Activated CD4-positive, alpha-beta T cell treated with anti-CD3 and anti-CD28 coated beads, Interleukin-2, amount 10 ng/mL, durations not matched to agents 24 days and 14 days (primary cell): ENCODE measurements at regions of chr3 and their contacts with region 1.

Region 1: DNA sequence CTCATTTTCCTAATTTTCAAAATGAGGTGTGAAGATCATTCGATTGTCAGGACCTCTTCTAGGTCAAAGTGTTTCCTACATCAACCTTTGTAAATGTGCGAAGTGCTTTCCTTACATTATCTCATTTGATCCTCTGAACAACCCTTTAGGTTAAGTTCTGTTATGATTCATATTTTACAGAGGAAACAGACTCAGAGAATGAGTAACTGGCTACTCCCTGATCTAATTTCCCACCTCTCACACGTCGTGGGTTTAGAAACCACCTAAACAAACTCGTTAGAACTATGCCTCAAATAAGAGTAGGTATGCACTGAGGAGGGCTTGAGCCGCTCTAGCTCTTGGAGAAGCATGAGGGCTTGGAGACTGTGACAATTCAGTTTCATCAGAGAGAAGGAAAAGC is 148.6 kb downstream of the CD47 start:
- DNase-seq: peak; percentile 75
- H3K4me3 Mint-ChIP-seq: peak overlapping the region; percentile 43
- H3K27ac Mint-ChIP-seq: peak overlapping the region; percentile 73
- H3K4me1 Mint-ChIP-seq: peaks cover 22% of the 10 kb centered on the region
- H3K27me3 Mint-ChIP-seq: peaks cover 5% of the 10 kb centered on the region

Region 2: DNA sequence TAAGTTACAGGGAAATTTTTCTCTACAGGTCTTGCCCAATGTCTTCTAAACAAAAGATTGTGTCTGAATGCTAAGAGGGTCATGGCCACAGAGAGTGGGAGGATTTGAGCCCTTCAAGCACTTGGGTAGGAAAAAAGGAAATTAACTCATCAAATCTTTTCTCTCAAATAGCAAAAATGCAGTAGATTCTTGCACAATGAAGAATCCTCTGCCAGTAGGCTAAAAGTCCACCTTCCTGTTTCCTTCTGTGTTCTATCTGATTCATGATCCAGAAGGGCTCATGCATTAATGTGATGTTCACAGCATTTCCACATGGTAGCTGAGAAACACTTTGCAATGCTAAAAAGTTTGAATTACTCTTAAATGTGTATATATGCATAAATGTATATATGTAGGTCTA is 28.5 kb before region 1 on chr3:
- intact Hi-C with region 1: no loop called
- DNase-seq: no peak
- H3K4me3 Mint-ChIP-seq: no peak overlapping the region
- H3K27ac Mint-ChIP-seq: no peak overlapping the region
- H3K4me1 Mint-ChIP-seq: peaks cover 10% of the 10 kb centered on the region
- H3K27me3 Mint-ChIP-seq: peaks cover 21% of the 10 kb centered on the region

Region 3: DNA sequence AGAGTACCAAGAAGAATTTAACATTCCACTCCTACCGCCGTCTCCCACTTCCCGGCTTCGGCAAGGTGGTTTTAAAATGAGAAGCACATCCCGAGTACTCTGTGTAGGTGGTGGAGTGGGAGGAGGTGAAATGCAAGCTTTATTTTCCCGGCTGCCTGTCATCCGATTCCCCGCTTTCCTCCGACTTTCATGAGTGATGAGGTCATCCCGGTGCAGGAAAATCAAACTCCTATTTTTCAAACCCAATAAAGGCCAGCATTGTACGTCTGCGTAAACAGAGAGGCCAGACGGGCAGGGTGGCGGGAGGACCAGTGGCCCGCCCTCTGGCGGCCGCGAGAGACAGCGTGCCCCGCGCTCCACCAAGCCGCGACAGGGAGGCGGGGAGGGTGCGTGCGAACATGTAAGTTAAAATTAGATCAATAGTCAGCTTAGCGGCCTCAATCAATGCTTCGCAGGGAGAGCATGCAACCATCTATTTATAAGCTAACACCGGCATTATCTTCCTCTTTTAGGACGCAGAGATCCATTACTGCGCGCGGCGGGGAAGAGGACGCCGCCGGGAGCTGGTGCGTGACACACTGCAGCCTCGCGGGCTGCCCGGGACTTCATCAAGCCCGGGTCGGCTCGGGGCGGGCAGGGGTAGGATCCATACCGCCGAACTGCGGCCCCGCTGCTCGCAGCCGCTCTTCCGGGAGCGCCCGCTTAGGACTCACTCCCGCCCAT is 14.7 kb before region 1 on chr3:
- intact Hi-C with region 1: loop called (anchors 1 kb)
- DNase-seq: peak; percentile 90
- H3K4me3 Mint-ChIP-seq: peak overlapping the region; percentile 87
- H3K27ac Mint-ChIP-seq: peak overlapping the region; percentile 59
- H3K4me1 Mint-ChIP-seq: peaks cover 13% of the 10 kb centered on the region
- H3K27me3 Mint-ChIP-seq: peaks cover 19% of the 10 kb centered on the region

Region 4: DNA sequence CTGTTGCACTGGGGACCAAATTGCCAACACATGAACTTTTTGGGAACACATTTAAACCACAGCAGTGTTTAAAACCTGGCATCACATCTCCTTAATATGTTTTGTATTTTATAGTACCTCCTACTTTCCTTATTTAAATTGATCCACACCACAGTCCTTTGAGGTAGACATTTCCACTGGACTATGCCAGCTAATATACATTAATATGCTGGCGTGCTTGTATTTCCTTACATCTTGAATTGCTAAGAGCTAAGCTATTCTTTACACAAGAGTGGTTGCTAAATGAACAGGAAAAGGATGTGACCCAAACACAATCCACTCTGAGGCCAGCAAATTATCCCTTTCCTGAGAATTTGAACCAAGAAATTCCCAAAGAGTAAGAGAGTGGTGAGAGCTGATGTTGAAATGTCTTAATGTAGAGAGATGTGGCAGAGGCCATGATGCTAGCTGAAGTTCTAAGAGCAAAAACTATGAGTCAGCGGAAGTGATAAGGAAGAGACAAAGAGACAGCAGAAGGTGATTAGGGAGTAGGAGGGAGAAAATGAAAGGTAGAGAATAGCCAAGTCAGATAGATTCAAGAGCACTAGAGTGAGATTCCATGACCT is 17.4 kb after region 1 on chr3:
- intact Hi-C with region 1: loop called (anchors 2 kb)
- DNase-seq: no peak
- H3K4me3 Mint-ChIP-seq: no peak overlapping the region
- H3K27ac Mint-ChIP-seq: no peak overlapping the region
- H3K4me1 Mint-ChIP-seq: peaks cover 10% of the 10 kb centered on the region
- H3K27me3 Mint-ChIP-seq: peaks cover 15% of the 10 kb centered on the region

Region 5: DNA sequence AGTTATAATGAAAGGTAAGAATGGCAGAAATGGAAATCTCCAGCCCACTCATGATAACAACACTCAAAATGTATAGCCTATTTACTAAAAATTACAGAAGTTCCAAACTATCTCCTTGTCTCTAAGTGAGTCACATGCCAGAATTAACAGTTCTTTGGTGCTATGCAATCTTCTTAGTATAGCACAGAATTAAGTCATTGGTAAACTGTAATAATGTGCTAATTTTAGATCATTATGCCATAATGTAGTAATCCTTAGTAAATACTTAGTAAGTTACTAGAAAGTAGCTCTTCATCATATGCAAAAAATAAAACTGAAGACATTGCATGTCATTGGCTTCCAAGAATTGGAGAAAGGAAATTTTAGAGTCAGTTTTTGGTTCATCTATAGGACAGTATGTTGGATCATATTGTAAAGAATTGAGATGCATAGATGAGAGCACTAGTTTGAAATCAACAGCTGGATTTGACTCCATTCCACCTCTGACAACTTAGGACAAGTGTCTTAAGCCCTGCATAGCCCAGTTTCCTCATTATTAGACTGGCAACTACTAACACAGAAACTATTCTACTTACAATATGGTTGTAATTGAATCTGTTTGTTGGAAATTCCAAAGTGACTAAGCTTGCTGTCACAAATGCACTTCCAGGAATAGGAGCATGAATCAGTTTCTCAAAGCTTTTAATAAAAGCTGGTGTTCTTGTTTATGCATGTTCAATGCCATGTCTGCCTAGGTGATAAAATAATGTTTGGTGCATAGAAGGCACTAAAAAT is 188.6 kb after region 1 on chr3:
- intact Hi-C with region 1: loop called (anchors 5 kb)
- DNase-seq: no peak
- H3K4me3 Mint-ChIP-seq: peak overlapping the region; percentile 57
- H3K27ac Mint-ChIP-seq: peak overlapping the region; percentile 78
- H3K4me1 Mint-ChIP-seq: peaks cover 81% of the 10 kb centered on the region
- H3K27me3 Mint-ChIP-seq: no peaks in the 10 kb centered on the region

Region 6: DNA sequence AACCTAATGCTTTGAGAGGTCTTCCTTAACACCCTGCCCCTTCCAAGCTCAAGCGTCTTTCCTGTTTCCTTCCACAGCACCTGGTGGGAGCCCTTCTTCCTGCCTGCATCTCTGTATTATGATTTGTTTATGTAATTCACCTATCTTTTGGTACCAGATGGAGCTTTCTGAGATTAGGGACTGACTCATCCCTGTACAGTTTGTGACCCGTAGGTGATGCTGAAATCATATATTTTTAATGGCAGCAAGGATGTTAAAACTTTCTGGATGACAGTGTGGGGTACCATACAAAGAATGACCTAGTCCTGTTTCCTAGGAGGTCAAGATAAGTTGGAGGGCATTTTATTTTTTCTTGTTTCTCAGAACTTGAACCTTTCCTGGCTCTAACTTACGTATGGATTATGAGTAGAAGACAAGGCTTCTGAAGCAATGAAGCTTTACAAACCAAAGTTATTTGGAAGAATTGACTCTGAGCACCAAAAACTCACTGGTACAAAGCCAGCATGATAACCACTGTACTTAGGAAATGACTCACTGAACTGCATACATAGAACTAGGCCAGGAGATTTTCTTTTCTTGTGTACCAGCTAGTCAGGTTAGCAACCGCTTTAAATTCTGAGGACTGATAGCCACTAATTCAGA is 400.7 kb after region 1 on chr3:
- intact Hi-C with region 1: loop called (anchors 5 kb)
- DNase-seq: peak; percentile 58
- H3K4me3 Mint-ChIP-seq: peak overlapping the region; percentile 15
- H3K27ac Mint-ChIP-seq: peak overlapping the region; percentile 79
- H3K4me1 Mint-ChIP-seq: peaks cover 23% of the 10 kb centered on the region
- H3K27me3 Mint-ChIP-seq: peaks cover 7% of the 10 kb centered on the region

Region 7: DNA sequence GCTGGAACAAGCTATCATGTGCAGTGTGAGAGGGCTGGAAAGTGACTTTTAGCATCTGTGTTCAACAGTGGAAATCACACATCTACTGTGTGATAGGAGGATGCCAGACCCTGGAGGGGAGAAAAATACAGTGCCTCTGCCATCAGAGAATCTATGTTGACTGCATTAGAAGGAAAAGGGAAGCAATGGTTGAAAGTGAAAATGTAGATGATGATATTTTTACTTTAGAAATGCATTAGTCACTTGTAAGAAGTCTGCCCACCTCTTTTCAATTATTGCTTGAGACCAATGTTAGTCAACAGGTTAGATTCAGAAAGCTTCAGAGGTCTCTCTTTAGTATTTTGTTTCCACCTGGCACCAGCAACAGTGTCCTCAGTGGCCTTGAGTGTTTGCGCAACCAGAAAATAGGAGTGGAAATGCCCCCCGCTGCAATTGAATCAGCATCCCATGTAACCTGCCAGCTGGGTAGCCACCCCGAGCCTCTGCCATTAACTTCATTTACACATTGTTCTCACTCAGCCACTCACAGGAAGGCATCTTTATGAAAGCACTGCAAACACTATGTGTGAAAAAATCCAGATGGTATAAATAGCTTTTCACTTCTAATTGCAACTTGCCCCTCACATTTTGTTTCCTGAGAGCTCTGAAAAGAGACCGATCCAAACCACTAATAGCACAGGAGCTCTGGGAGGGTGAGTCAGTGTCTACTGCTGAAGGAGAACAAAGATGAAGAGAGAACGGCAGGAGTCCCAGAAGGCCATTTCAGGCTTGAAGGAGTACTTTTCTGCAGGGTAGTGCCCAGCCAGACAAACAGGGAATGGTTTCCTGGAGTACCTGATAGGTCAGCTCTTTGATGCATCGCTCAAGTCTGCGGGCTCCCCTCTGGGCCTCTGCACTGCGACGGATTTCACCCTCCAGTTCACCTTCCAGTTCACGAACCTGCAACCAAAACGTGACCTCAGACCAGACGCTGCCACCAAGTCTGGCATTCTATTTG is 446.2 kb after region 1 on chr3:
- intact Hi-C with region 1: loop called (anchors 5 kb)
- DNase-seq: no peak
- H3K4me3 Mint-ChIP-seq: peak overlapping the region; percentile 13
- H3K27ac Mint-ChIP-seq: peak overlapping the region; percentile 80
- H3K4me1 Mint-ChIP-seq: peaks cover 18% of the 10 kb centered on the region
- H3K27me3 Mint-ChIP-seq: peaks cover 11% of the 10 kb centered on the region